IMR-90 (cell line): ENCODE measurements at regions of chr19 and their contacts with region 1.

Region 1: DNA sequence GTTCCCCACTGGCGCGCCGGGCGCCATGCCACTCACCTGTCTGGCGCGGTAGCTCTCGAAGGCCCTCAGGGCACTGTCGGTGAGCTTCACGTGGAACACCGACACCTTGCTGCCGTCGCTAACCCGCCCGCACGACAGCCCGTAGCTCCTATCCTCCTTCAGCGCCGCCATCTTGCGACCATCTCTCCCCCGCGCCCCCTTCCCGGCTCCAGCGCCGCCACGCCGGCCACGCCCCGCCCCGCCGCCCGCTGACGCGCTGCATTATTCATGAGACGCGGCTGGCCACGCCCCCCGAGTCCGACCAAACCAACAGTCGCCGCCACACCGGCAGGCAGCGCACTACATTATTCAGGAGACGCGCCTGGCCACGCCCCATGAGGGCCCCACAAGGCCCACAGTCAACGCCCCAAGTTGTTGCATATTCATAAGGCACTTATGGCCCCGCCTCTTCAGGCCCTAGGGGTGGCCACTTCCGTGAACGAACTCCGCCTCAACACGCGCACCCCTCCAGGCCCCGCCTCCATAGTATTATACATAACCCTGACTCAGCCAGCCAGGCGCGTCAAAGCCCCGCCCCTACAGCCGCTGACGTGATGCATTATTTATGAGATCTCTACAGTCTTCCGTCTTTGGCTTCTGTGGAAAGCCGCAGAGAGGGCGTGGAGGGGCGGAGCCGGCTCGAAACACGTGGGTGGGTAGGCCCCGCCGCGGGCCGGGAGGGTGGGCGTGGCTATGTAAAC is at the start of gene ELL:
- DNase-seq: peak; percentile 100
- ATAC-seq: peak; percentile 90
- H3K4me3 ChIP-seq: peak within 1 kb of the TSS; percentile 92
- H3K27ac ChIP-seq: peak within 1 kb of the TSS; percentile 94
- H3K4me1 ChIP-seq: peaks cover 2% of the 10 kb centered on the region; the same call in 1 of the 2 replicates
- H3K27me3 ChIP-seq: no peaks in the 10 kb centered on the region
- CTCF ChIP-seq: peak; percentile 34
- POLR2A ChIP-seq: peak; percentile 98
- RAD21 ChIP-seq: no peak
- total RNA-seq, gene ELL: 6.3 and 6.7 TPM in 2 replicates

Region 2: DNA sequence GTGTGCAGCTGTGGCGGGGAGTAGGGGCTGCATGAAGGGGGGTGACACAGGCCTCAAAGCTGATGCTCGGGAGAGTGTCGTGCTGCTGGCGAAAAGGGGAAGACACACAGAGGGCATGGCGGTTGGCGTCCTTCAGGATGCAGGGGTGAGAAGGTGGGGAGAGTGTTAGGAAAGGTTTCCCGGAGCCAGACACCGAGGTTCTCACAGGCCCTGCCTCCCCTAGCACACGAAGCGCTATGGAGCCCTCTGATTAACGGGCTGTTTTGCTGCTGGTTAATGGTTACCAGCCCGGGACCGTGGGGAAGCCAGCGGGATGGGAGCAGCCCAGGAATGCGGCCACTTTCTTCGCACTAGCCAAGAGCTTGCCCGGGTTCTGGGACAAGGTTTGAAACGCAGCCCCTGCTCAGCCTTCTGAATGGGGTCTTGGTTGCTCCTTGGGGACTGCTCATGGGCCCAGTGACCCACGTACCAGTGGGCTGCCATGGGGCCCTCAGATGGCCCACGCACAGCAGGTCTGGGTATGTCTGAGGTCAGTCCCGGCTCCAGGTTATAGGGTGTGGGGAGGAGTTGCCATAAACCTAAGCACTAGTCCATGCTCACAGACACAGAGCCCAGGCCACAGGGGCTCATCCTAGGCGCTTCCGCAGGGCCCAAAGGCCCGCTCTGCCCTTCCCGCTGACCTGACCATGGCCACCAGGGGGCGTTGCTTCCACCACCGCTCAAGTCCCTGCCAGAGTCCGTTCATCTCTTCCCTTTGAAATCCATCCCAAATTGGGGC is 52.8 kb before region 1 on chr19:
- CTCF ChIA-PET with region 1: interaction called, 4 read pairs
- POLR2A ChIA-PET with region 1: no interaction called
- dilution Hi-C with region 1: no loop called
- in situ Hi-C with region 1: no loop called
- intact Hi-C with region 1: loop called (anchors 1 kb)
- DNase-seq: peak; percentile 66
- ATAC-seq: peak; percentile 25; the same call in 1 of the 2 replicates
- H3K4me3 ChIP-seq: no peak overlapping the region
- H3K27ac ChIP-seq: no peak overlapping the region
- H3K4me1 ChIP-seq: peaks cover 32% of the 10 kb centered on the region
- H3K27me3 ChIP-seq: no peaks in the 10 kb centered on the region
- CTCF ChIP-seq: peak; percentile 72
- POLR2A ChIP-seq: no peak
- RAD21 ChIP-seq: peak; percentile 71

Region 3: GRCh38 chr19:18488838-18489626 is 33.0 kb before region 1 on chr19:
- CTCF ChIA-PET with region 1: no interaction called
- POLR2A ChIA-PET with region 1: no interaction called
- dilution Hi-C with region 1: no loop called
- in situ Hi-C with region 1: no loop called
- intact Hi-C with region 1: no loop called
- DNase-seq: no peak
- ATAC-seq: no peak
- H3K4me3 ChIP-seq: no peak overlapping the region
- H3K27ac ChIP-seq: no peak overlapping the region
- H3K4me1 ChIP-seq: peaks cover 31% of the 10 kb centered on the region
- H3K27me3 ChIP-seq: no peaks in the 10 kb centered on the region
- CTCF ChIP-seq: peak; percentile 29; the same call in 1 of the 2 replicates
- POLR2A ChIP-seq: no peak
- RAD21 ChIP-seq: peak; percentile 36